ENCODE measurements at regions of chr7 and their contacts with region 1.

Region 1: GRCh38 chr7:157397731-157398691 is 61.2 kb downstream of the DNAJB6 start:
- DNase-seq: no peak
- CTCF ChIP-seq: peak; percentile 20

Region 2: GRCh38 chr7:157386979-157387800 is 10.8 kb before region 1 on chr7:
- CTCF ChIA-PET with region 1: interaction called, 20 read pairs
- POLR2A ChIA-PET with region 1: no interaction called
- DNase-seq: peak; percentile 77
- CTCF ChIP-seq: peak; percentile 75